Heart left ventricle (tissue), 16 donors: ENCODE measurements at regions of chr2 and their contacts with region 1.

Region 1: DNA sequence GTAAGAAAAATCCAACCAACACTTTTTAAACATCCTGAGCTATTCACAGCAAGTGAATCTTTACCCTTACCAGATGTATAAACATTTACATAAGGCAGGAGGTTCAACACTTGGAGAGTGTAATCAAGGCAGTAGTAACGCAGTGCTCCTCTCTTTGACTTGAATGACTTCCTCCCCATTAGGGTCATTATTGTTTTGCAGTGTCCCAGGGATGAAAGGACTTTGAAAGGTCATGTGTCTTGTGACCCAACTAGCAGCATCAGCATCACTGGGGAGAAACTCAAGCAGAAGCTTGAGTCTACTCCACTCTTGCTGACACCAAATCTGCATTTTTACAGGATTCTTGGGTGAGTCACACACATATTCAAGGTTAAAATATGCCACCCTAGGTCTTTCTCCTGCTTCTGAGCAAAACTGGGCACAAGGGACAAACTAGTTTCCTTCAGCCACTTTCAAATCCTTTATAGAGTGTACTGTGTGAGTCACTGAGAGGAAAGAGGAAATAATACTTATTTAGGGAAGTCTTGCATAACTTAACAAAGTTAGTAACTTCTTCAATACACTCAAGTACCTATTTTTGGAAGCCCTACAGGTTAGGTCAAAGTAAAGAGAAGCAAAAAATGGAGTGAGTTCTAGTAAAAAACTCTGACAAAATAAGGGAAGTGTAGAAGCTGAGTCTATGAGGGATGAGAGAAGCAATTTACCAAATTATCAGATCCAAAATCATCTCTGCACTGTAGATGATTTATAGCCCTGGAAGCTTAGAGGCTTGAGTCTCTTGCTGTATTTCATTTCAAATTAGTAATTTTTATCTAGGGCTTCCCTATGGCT is 51.0 kb upstream of the EML4 start:
- DNase-seq: no peak
- ATAC-seq: peak; percentile 55 to 94 (median 84)
- H3K4me3 ChIP-seq: no peak overlapping the region
- H3K27ac ChIP-seq: peak overlapping the region in 10 of 12 donors; percentile 29 to 83 (median 47)
- H3K4me1 ChIP-seq: peaks cover 0 to 49% (median 13%) of the 10 kb centered on the region in 12 donors
- H3K27me3 ChIP-seq: no peaks in the 10 kb centered on the region
- CTCF ChIP-seq: no peak
- POLR2A ChIP-seq: no peak

Region 2: GRCh38 chr2:41644936-41645335 is 473.2 kb before region 1 on chr2:
- intact Hi-C with region 1: no loop called
- DNase-seq: no peak
- ATAC-seq: no peak
- H3K4me3 ChIP-seq: no peak overlapping the region
- H3K27ac ChIP-seq: no peak overlapping the region
- H3K4me1 ChIP-seq: no peaks in the 10 kb centered on the region
- H3K27me3 ChIP-seq: no peaks in the 10 kb centered on the region
- CTCF ChIP-seq: no peak
- POLR2A ChIP-seq: no peak

Region 3: GRCh38 chr2:41686156-41686555 is 432.0 kb before region 1 on chr2:
- intact Hi-C with region 1: no loop called
- DNase-seq: no peak
- ATAC-seq: no peak
- H3K4me3 ChIP-seq: no peak overlapping the region
- H3K27ac ChIP-seq: no peak overlapping the region
- H3K4me1 ChIP-seq: no peaks in the 10 kb centered on the region
- H3K27me3 ChIP-seq: no peaks in the 10 kb centered on the region
- CTCF ChIP-seq: no peak
- POLR2A ChIP-seq: no peak

Region 4: GRCh38 chr2:42072349-42073118 is 45.6 kb before region 1 on chr2:
- intact Hi-C with region 1: no loop called
- DNase-seq: peak; percentile 50 to 86 (median 78)
- ATAC-seq: peak; percentile 81 to 86 (median 83)
- H3K4me3 ChIP-seq: no peak overlapping the region
- H3K27ac ChIP-seq: peak overlapping the region in 2 of 12 donors; percentile 23 to 39
- H3K4me1 ChIP-seq: peaks cover 0 to 24% (median 13%) of the 10 kb centered on the region in 12 donors
- H3K27me3 ChIP-seq: no peaks in the 10 kb centered on the region
- CTCF ChIP-seq: peak in 2 of 12 donors; percentile 10 to 27
- POLR2A ChIP-seq: no peak

Region 5: DNA sequence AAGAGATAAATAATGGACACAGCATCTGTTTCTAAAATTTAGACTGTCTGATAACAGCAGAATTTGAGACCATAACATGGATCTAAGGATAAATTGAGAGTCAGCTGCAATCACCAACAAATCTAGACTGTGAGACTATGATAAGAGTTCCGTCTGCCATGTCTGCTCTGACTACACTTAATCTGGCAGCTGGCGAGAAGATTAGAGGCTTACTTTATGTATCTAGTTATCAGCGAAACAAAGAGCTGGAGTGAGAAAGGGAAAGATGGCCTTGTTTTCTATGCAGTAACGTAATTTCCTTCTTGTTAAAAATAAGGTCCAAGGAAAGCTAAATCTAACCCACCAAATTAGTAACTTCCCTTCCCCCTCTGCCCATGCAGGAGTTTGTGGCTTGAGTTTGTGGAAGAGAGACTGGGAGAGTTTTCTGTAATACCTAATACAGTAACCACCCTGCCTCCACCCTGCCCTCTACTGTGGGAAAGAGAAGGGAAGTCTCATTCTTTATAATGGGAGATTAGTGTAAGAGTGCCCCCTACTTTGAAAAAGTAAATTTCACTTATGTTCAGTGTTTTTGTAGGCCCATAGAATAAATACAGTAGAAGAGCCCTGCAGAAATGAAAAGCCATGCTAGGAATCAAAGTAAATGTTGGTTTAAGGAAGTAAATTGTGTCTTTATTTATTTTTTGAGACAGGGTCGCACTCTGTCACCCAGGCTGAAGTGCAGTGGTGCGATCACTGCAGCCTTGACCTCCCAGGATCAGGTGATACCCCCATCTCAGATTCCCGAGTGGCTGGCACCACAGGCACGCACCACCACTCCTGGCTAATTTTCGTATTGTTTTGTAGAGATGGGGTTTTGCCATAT is 78.5 kb after region 1 on chr2:
- intact Hi-C with region 1: loop called in 1 of 10 experiments (anchors 5 kb)
- DNase-seq: peak in 4 of 5 donors; percentile 34 to 57 (median 39)
- ATAC-seq: peak; percentile 32 to 93 (median 80)
- H3K4me3 ChIP-seq: no peak overlapping the region
- H3K27ac ChIP-seq: peak overlapping the region in 2 of 12 donors; percentile 26 to 40
- H3K4me1 ChIP-seq: peaks cover 0 to 71% (median 9%) of the 10 kb centered on the region in 12 donors
- H3K27me3 ChIP-seq: no peaks in the 10 kb centered on the region
- CTCF ChIP-seq: peak; percentile 27 to 76 (median 61)
- POLR2A ChIP-seq: no peak